ENCODE measurements at regions of chr1 and their contacts with region 1.

Region 1: GRCh38 chr1:168342572-168343280 is 62.0 kb downstream of the TBX19 start:
- DNase-seq: peak; percentile 90

Region 2: GRCh38 chr1:168572633-168573032 is 229.9 kb after region 1 on chr1:
- intact Hi-C with region 1: loop called (anchors 5 kb)
- DNase-seq: no peak

Region 3: GRCh38 chr1:169348383-169349036 is 1005.8 kb after region 1 on chr1:
- intact Hi-C with region 1: loop called (anchors 10 kb)
- DNase-seq: no peak

Measured in cardiac septum (tissue), 1 donor.